Activated CD8-positive, alpha-beta T cell treated with anti-CD3 and anti-CD28 coated beads, Interleukin-2, amount 10 ng/mL, durations not matched to agents 7 days and 5 days (primary cell): ENCODE measurements at regions of chr16 and their contacts with region 1.

Region 1: DNA sequence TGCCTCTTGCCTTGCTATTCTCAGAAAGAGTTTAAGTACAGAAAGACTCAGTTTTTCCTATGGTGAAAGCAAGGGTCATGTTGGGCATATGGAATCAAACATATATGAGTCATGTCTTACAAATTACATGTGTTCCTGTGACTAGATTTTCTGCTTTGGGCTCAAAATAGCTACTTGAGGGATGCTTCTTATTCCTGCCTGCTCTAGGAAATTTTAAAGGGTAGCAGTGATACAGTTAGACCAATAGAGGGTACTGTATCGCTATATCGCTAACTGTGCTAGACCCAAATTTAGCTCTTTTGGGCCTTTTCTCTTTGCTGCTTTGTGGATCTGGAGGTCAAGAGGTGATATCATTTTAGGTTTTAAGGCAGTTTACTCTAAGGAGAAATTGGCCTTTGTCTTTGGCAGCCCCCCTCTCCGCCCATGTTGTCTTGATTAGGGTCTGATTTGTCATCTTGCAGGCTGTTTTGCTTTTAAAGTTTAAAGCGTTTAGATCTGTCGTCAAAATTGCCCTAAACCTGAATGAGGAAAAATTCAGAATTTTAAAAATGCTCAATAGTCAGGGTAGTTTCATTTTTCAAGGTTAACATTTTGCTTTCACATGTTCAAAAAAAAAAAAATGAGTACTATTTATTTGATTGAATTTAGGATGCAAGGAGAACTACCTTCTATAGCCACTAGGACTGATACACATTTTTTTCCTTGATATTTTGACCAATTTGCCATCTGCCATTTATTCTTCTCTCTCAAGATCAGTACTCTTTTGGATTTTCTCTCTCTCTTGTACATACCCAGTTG is 8.8 kb downstream of the NFATC3 start:
- DNase-seq: no peak
- ATAC-seq: peak; percentile 67
- H3K4me3 Mint-ChIP-seq: no peak overlapping the region
- H3K27ac Mint-ChIP-seq: peak overlapping the region; percentile 31
- H3K4me1 Mint-ChIP-seq: peaks cover 71% of the 10 kb centered on the region
- H3K27me3 Mint-ChIP-seq: no peaks in the 10 kb centered on the region

Region 2: DNA sequence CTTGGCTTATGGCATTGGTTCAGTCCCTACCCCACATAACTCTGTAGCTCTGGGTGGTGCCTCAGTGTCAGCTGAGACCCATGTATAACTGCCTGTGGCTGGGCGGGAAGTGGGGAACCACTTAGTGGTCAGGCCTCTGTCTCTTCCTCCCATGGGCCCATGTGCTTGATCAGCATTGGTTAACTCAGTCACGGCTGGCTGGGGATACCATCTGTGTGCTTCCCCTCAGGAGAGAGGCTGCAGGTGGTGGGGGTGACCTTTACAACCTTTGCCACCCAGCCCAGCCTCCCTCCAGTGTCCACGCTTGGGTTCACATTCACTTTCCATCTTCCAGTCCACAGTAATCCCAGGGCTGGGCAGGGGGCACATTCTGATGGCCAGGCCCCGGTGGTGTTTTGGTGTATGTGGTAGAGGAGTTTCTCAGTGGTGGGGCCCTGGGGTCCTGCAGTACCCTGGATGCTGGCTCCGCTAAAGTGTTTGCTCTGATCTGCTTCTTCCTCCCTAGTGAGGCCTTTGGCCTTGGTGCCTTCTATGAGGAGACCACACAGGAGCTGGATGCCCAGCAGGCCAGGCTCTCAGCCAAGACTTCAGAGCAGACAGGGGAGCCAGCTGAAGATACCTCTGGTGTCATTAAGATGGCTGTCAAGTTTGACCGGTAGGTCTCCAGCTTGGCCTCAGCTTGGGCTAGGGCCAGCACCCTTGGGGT is 19.0 kb before region 1 on chr16:
- CTCF ChIA-PET with region 1: interaction called, 142 read pairs
- POLR2A ChIA-PET with region 1: interaction called, 4 read pairs
- DNase-seq: peak; percentile 95
- ATAC-seq: peak; percentile 81
- H3K4me3 Mint-ChIP-seq: peak overlapping the region; percentile 57
- H3K27ac Mint-ChIP-seq: peak overlapping the region; percentile 89
- H3K4me1 Mint-ChIP-seq: peaks cover 89% of the 10 kb centered on the region
- H3K27me3 Mint-ChIP-seq: no peaks in the 10 kb centered on the region

Region 3: GRCh38 chr16:68116256-68116867 is 22.3 kb after region 1 on chr16:
- CTCF ChIA-PET with region 1: interaction called, 40 read pairs
- POLR2A ChIA-PET with region 1: interaction called, 3 read pairs
- DNase-seq: no peak
- ATAC-seq: peak; percentile 53
- H3K4me3 Mint-ChIP-seq: no peak overlapping the region
- H3K27ac Mint-ChIP-seq: no peak overlapping the region
- H3K4me1 Mint-ChIP-seq: peaks cover 81% of the 10 kb centered on the region
- H3K27me3 Mint-ChIP-seq: no peaks in the 10 kb centered on the region

Region 4: DNA sequence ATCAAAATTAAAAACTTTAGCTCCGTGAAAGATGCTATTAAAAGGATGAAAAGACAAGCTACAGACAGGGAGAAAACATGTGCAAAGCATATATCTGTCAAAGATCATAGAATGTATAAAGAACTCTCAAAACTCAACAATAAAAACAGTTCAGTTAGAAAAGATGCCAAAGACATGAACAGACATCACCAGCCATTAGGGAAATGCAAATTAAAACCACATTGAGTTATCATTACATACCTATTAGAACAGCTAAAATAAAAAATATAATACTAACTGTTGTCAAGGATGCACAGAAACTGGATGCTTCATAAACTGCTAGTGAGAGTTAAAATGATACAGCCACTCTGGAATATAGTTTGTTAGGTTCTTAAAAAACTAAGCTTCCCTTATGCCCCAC is 50.0 kb after region 1 on chr16:
- CTCF ChIA-PET with region 1: interaction called, 18 read pairs
- POLR2A ChIA-PET with region 1: no interaction called
- DNase-seq: no peak
- ATAC-seq: no peak
- H3K4me3 Mint-ChIP-seq: no peak overlapping the region
- H3K27ac Mint-ChIP-seq: no peak overlapping the region
- H3K4me1 Mint-ChIP-seq: peaks cover 24% of the 10 kb centered on the region
- H3K27me3 Mint-ChIP-seq: no peaks in the 10 kb centered on the region

Region 5: DNA sequence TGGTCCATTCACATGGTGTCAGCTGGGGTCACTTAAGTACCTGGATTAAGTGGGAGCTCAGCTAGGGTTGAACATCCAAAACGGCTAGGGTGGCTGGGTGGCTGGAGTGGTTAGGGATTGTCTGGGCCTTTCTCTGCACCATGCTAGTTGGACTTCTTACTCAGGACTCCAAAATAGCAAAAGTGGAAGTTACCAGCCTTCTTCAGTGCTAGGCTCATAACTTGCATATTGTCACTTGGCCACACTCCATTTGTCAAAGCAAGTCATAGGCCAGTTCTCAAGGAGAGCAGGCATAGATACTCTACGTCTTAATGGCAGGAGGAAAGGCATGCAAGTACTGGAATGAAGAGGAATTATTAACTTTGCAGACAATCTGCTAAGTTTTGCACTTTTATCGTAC is 72.2 kb after region 1 on chr16:
- CTCF ChIA-PET with region 1: interaction called, 14 read pairs
- POLR2A ChIA-PET with region 1: no interaction called
- DNase-seq: no peak
- ATAC-seq: no peak
- H3K4me3 Mint-ChIP-seq: no peak overlapping the region
- H3K27ac Mint-ChIP-seq: no peak overlapping the region
- H3K4me1 Mint-ChIP-seq: no peaks in the 10 kb centered on the region
- H3K27me3 Mint-ChIP-seq: no peaks in the 10 kb centered on the region

Region 6: GRCh38 chr16:68200088-68200783 is 106.2 kb after region 1 on chr16:
- CTCF ChIA-PET with region 1: interaction called, 10 read pairs
- POLR2A ChIA-PET with region 1: no interaction called
- DNase-seq: no peak
- ATAC-seq: no peak
- H3K4me3 Mint-ChIP-seq: no peak overlapping the region
- H3K27ac Mint-ChIP-seq: no peak overlapping the region
- H3K4me1 Mint-ChIP-seq: peaks cover 3% of the 10 kb centered on the region
- H3K27me3 Mint-ChIP-seq: no peaks in the 10 kb centered on the region

Region 7: DNA sequence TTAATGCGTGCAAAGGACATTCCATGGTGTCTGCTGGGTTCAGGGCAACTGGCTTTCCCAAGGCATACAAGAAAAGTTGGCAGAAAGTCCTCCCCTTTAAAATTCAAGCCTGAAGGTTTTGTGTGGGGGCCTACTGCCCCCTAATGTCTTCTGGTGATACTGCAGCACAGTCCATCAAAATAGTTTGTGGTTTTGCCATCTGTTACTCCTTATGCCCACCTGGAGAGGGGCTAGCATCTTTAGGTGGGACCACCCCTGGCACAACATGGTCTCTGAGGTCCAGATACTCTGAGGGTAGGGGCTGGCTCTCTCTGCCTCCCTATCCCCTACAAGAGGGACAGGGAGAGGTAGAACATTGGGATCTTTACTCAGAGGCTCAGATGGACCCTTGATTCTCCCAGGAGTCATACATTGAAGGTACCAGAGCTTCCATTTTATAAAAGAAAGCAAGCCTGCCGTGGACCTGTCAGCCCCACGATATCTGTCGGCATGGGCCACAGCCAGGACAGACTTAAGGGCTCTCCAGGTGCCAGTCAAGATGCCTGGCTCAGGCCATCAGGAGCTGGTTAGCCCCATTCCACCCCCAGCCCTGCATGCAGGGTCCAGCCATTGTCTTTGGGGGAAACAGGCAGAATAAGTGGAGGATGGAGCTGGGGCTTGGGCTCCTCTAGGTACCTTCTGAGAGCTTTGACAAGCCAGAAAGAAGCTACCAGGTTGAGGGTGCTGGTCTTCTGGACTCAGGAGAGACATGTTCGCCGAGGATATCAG is 135.6 kb after region 1 on chr16:
- CTCF ChIA-PET with region 1: interaction called, 41 read pairs
- POLR2A ChIA-PET with region 1: interaction called, 4 read pairs
- DNase-seq: peak; percentile 55
- ATAC-seq: no peak
- H3K4me3 Mint-ChIP-seq: no peak overlapping the region
- H3K27ac Mint-ChIP-seq: no peak overlapping the region
- H3K4me1 Mint-ChIP-seq: peaks cover 53% of the 10 kb centered on the region
- H3K27me3 Mint-ChIP-seq: no peaks in the 10 kb centered on the region